Ascending aorta (tissue), 2 donors: ENCODE measurements at regions of chr14 and their contacts with region 1.

Region 1: GRCh38 chr14:30656190-30656632 is 34.1 kb downstream of the SCFD1 start:
- DNase-seq: no peak
- H3K4me3 ChIP-seq: no peak overlapping the region
- H3K27ac ChIP-seq: peak overlapping the region in 1 of 2 donors; percentile 8
- H3K4me1 ChIP-seq: no peaks in the 10 kb centered on the region
- H3K27me3 ChIP-seq: no peaks in the 10 kb centered on the region
- CTCF ChIP-seq: peak in 2 of 3 experiments; percentile 40 to 49

Region 2: GRCh38 chr14:30153717-30154116 is 502.5 kb before region 1 on chr14:
- intact Hi-C with region 1: no loop called
- DNase-seq: no peak
- H3K4me3 ChIP-seq: no peak overlapping the region
- H3K27ac ChIP-seq: no peak overlapping the region
- H3K4me1 ChIP-seq: no peaks in the 10 kb centered on the region
- H3K27me3 ChIP-seq: no peaks in the 10 kb centered on the region
- CTCF ChIP-seq: no peak

Region 3: DNA sequence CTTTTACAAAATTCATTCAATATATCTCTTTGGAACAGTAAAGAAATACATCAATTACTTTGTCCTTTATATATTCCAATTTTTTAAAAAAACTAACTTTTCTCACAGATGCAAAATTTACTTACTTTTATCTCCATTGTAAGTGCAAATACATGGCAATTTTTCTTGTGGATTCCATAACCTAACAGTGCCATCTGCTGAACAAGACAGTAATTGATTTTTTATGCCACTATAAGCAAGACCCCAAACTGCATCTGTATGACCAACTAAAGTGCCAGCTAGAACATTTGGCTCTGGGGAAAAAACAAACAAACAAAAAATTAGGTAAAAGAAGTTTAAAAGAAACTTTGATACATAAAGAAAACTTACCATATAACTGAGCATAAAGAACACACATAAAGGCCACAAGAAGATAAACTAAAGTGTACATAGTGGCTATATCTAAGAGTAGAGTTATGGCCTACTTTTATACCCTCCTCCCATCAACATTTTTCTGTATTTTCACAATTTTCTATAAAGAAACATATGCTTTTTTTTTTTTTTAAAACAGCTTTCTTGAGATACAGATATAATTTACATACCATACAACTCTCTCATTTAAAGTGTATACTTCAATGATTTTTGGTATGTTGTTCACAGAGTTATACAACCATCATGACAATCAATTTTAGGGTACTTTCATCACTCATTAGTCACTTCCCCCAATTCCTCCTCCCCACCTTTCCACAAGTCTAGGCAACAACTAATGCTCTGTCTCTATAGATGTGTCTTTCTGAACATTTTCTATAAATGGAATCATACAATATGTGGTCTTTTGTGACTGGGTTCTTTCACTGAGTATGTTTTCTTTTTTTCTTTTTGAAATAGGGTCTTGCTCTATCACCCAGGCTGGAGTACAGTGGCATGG is 250.8 kb after region 1 on chr14:
- intact Hi-C with region 1: loop called (anchors 10 kb)
- DNase-seq: no peak
- H3K4me3 ChIP-seq: no peak overlapping the region
- H3K27ac ChIP-seq: no peak overlapping the region
- H3K4me1 ChIP-seq: no peaks in the 10 kb centered on the region
- H3K27me3 ChIP-seq: no peaks in the 10 kb centered on the region
- CTCF ChIP-seq: peak in 1 of 3 experiments; percentile 19